ENCODE measurements at regions of chrX and their contacts with region 1.

Region 1: GRCh38 chrX:109890895-109891502 is 111.9 kb upstream of the TMEM164 start:
- DNase-seq: peak in 1 of 2 experiments; percentile 54
- H3K4me3 ChIP-seq: no peak overlapping the region
- H3K27ac ChIP-seq: no peak overlapping the region
- H3K4me1 ChIP-seq: no peaks in the 10 kb centered on the region
- H3K27me3 ChIP-seq: no peaks in the 10 kb centered on the region
- CTCF ChIP-seq: peak; percentile 98

Region 2: GRCh38 chrX:109485470-109486340 is 405.3 kb before region 1 on chrX:
- CTCF ChIA-PET with region 1: interaction called, 6 read pairs
- POLR2A ChIA-PET with region 1: no interaction called
- intact Hi-C with region 1: loop called (anchors 1 kb)
- DNase-seq: peak; percentile 49 to 60
- H3K4me3 ChIP-seq: no peak overlapping the region
- H3K27ac ChIP-seq: no peak overlapping the region
- H3K4me1 ChIP-seq: no peaks in the 10 kb centered on the region
- H3K27me3 ChIP-seq: peaks cover 7% of the 10 kb centered on the region; the same call in 1 of the 2 replicates
- CTCF ChIP-seq: peak; percentile 99

Region 3: GRCh38 chrX:109709129-109709631 is 181.8 kb before region 1 on chrX:
- CTCF ChIA-PET with region 1: interaction called, 7 read pairs
- POLR2A ChIA-PET with region 1: no interaction called
- intact Hi-C with region 1: loop called (anchors 1 kb)
- DNase-seq: peak; percentile 3 to 88
- H3K4me3 ChIP-seq: peak overlapping the region; percentile 13; the same call in 1 of the 2 replicates
- H3K27ac ChIP-seq: peak overlapping the region; percentile 74
- H3K4me1 ChIP-seq: peaks cover 33% of the 10 kb centered on the region
- H3K27me3 ChIP-seq: no peaks in the 10 kb centered on the region
- CTCF ChIP-seq: no peak

Region 4: DNA sequence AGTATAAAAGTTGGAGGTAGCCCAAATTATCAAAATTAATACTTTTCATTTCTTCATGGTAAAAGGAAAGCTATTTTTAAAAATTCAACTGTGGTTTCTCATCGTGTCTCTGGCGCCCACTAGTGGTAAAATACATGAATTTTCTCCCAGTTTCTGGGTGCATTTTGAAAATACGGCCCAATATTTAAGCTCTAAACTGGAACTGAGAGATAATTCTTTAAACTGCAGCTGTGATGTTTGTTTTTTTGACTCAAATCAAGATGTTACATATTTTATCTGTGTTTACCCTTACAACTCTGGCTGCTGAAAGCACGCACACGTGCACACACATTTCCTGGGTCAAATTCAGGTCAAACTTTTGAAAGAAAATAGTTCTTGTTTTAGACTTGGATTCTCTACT is 34.0 kb before region 1 on chrX:
- CTCF ChIA-PET with region 1: interaction called, 12 read pairs
- POLR2A ChIA-PET with region 1: no interaction called
- intact Hi-C with region 1: loop called (anchors 2 kb)
- DNase-seq: no peak
- H3K4me3 ChIP-seq: no peak overlapping the region
- H3K27ac ChIP-seq: no peak overlapping the region
- H3K4me1 ChIP-seq: peaks cover 7% of the 10 kb centered on the region; the same call in 1 of the 2 replicates
- H3K27me3 ChIP-seq: no peaks in the 10 kb centered on the region
- CTCF ChIP-seq: peak; percentile 96

Region 5: GRCh38 chrX:110146521-110146920 is 255.5 kb after region 1 on chrX:
- CTCF ChIA-PET with region 1: interaction called, 8 read pairs
- POLR2A ChIA-PET with region 1: no interaction called
- intact Hi-C with region 1: loop called (anchors 1 kb)
- DNase-seq: peak in 1 of 2 experiments; percentile 32
- H3K4me3 ChIP-seq: no peak overlapping the region
- H3K27ac ChIP-seq: no peak overlapping the region
- H3K4me1 ChIP-seq: no peaks in the 10 kb centered on the region
- H3K27me3 ChIP-seq: no peaks in the 10 kb centered on the region
- CTCF ChIP-seq: peak; percentile 78